Endothelial cell of umbilical vein (primary cell): ENCODE measurements at regions of chr2 and their contacts with region 1.

Region 1: DNA sequence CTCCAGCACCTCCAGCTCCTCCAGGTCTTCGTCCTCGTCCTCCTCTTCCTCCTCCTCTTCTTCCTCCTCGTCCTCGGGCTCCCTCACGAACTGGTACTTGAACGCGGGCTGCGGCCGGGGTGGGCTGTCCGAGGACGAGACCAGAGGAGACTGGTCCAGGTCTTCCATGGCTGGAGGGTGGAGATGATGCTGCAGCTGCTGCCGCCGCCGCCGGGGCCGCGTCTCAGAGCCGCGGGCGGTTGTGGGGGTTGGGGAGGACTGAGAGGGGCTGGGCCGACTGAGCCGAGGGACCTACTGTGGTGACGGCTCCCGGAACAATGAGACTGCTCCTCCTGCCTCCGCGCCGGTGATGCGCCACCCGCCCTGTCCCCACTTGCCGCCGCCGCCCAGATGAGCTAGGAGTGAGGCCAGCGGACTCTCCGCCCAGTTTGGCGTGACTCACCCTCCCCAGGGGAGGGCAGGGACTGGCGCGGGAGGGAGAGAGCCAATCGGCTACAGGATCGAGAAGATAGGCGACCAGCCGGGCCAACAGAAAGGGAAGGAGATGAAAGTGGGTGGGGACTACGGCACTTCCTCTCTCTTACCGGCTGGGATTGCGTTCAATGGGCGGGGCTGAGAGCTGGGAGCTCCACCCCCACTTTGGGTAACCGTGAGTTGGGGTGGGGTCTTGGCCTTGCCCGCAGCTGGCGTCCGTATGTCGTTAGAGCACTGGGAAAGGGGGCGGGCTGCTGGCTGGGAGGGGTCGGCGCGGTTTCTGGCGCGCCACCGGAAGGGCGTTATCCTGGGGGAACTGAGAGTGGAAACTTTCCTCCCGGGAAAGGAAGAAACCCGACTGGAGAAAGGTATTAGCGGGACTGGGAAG is at the start of gene RTN4:
- DNase-seq: peak; percentile 99
- H3K4me3 ChIP-seq: peak within 1 kb of the TSS; percentile 86 to 99 (median 97)
- H3K27ac ChIP-seq: peak within 1 kb of the TSS; percentile 97
- H3K4me1 ChIP-seq: peaks cover 38% of the 10 kb centered on the region
- H3K27me3 ChIP-seq: no peaks in the 10 kb centered on the region
- CTCF ChIP-seq: peak in 1 of 2 donors; percentile 26
- POLR2A ChIP-seq: peak; percentile 94
- total RNA-seq, gene RTN4: 472 and 486 TPM in 2 replicates

Region 2: DNA sequence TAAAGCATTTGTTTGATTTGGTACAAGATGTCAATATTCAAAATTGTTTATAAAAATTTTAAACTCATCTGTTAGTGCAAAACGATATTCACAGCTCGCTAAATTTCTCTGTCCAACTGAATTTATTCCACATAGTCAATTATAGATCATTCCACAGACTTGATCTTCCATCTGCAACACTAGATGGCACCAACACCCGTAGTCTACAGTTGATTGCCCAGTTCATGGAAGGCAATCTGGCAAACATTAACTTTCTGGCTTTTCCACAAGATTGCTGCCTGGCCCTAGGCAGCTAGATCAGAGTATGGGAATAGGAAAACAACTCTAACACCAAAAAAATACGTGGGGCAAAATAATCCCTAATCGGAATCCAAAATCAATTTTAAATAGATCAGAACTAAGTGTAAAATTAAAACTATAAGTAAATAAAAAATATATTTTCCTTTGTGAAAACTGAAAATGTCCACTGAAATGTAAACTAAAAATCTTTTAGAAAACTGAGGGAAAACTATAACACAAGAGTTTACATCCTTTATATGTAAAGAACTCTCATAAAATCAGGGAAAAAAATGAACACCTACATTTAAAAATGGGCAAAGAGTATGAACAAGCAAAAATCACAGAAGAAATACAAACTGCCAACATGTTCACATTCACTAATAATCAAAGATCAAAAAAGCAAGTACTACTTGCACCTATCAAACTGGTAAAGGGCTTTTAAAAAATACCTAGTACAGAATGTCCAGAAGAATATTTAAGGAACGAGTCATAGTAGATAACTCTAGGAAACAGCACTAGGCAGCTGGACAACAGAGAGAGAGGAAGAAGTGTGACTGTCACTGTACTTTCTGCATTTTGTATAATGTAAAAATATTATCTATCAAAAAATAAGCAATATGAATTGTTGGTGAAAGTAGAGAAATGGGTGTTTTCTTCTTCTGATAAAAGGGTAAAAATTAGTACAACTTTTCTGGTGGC is 35.1 kb before region 1 on chr2:
- CTCF ChIA-PET with region 1: interaction called, 27 read pairs
- POLR2A ChIA-PET with region 1: no interaction called
- dilution Hi-C with region 1: no loop called
- intact Hi-C with region 1: loop called (anchors 1 kb)
- DNase-seq: peak; percentile 72
- H3K4me3 ChIP-seq: no peak overlapping the region
- H3K27ac ChIP-seq: no peak overlapping the region
- H3K4me1 ChIP-seq: peaks cover 63% of the 10 kb centered on the region
- H3K27me3 ChIP-seq: no peaks in the 10 kb centered on the region
- CTCF ChIP-seq: peak; percentile 49
- POLR2A ChIP-seq: no peak

Region 3: GRCh38 chr2:55073000-55073983 is 22.9 kb after region 1 on chr2:
- CTCF ChIA-PET with region 1: interaction called, 11 read pairs
- POLR2A ChIA-PET with region 1: interaction called, 3 read pairs
- dilution Hi-C with region 1: no loop called
- intact Hi-C with region 1: no loop called
- DNase-seq: no peak
- H3K4me3 ChIP-seq: no peak overlapping the region
- H3K27ac ChIP-seq: no peak overlapping the region
- H3K4me1 ChIP-seq: peaks cover 7% of the 10 kb centered on the region
- H3K27me3 ChIP-seq: no peaks in the 10 kb centered on the region
- CTCF ChIP-seq: no peak
- POLR2A ChIP-seq: no peak

Region 4: DNA sequence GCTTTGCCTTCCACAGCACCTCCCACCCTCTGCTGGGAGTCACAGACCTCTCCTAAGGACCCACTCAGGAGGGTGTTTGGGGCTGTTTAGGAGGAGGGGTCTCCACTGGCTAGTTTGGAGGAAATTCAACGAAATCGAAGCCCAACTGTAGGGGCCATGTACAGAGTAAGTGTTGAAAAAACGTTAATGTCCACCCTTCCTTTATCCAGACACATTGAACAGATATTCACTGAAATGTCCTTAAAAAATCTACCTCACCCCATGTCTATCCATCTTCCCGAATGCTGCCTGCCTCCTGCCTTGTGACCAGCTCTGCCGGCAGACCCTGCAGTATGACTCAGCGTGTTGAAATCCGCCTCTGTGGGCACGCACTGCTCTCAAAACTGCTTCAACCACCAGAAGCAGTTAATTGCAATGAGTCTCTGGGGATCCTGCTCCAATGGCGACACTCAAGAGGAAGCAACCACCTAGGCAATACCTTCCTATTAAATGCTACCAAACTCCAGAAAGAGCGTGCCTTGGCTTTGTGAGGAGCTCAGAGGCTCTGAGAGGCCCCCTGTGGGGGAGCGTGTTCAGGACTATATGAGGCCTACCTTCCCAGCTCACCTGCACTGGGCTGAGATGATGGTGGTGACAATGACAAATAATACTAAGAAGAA is 61.3 kb after region 1 on chr2:
- CTCF ChIA-PET with region 1: interaction called, 12 read pairs
- POLR2A ChIA-PET with region 1: interaction called, 9 read pairs
- dilution Hi-C with region 1: no loop called
- intact Hi-C with region 1: no loop called
- DNase-seq: peak; percentile 49
- H3K4me3 ChIP-seq: no peak overlapping the region
- H3K27ac ChIP-seq: peak overlapping the region; percentile 44
- H3K4me1 ChIP-seq: peaks cover 48% of the 10 kb centered on the region
- H3K27me3 ChIP-seq: no peaks in the 10 kb centered on the region
- CTCF ChIP-seq: no peak
- POLR2A ChIP-seq: no peak

Region 5: DNA sequence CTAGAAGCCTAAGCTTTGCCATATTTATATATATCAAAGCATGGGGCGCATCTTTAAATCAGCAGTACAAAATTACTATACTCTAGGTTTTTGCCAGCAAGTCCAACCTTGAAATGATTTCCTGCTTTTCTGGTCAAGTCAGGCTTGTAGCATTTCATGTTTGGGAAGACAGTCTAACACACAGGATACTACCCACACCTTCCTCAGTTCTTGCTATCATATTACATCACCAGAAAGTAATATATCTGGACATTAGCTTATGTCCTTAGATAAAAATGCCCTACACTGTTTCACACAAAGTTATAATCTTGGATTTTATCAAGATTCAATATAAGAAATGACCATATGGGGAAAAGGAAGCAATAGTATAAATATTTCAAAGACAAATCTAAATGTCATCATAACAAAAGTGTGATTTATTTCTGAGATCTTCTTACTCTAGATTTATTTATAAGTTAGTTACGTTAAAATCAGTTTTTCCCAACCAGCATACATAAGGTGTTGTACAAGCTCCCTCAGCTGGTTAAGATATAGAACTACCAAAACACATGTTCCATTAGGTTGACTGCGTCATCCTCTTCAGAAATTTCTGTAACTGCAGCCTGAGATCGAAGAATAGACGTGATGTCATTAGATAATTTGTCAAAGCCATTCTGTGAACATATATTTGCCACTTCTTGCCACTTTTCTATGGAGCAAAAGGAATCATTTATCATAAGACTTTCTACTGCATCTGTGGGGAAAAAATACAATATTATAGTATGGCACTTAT is 125.1 kb after region 1 on chr2:
- CTCF ChIA-PET with region 1: interaction called, 129 read pairs
- POLR2A ChIA-PET with region 1: no interaction called
- dilution Hi-C with region 1: no loop called
- intact Hi-C with region 1: no loop called
- DNase-seq: peak; percentile 70
- H3K4me3 ChIP-seq: no peak overlapping the region
- H3K27ac ChIP-seq: no peak overlapping the region
- H3K4me1 ChIP-seq: no peaks in the 10 kb centered on the region
- H3K27me3 ChIP-seq: no peaks in the 10 kb centered on the region
- CTCF ChIP-seq: peak; percentile 33 to 38
- POLR2A ChIP-seq: no peak